B cell (primary cell): ENCODE measurements at regions of chr6 and their contacts with region 1.

Region 1: DNA sequence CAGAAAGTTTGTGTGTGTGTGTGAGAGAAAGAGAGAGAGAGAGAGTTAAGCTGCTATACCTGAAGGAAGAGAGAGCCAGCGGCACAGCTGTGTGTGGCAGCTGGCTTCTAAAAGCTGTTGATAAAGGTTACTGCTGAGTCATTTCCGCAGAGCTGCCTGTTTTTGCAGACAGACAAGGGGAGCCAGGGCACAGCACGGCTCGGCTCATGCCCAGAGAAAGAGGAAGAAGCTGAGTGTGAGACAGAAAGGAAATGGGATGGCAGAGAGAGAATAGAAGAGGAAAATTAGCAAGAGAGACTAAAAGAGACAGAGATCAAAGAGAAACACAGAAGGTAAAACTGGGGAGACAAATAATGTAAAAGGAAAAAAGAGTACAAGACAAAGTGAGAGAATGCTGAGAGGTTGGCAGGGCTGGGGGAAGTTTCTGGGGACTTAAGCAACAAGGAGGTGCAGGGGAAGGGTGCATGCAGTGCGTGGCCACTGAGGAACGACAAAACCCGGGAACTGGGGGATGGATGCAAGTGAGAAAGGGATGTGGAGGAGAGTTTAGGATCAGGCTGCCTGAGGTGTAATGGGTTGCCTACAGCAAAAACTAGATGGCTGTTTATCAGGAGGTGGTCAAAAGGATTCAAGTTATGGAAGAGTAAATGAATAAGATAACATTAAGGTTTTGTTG is 22.7 kb downstream of the HLA-A start:
- DNase-seq: peak; percentile 89
- ATAC-seq: peak; percentile 93
- H3K4me3 ChIP-seq: peak overlapping the region in 4 of 5 experiments; percentile 38 to 65 (median 46)
- H3K4me3 Mint-ChIP-seq: peak overlapping the region; percentile 86
- H3K27ac ChIP-seq: peak overlapping the region; percentile 47 to 66
- H3K27ac Mint-ChIP-seq: peak overlapping the region; percentile 90
- H3K4me1 ChIP-seq: peaks cover 25 to 30% of the 10 kb centered on the region in 2 donors
- H3K4me1 Mint-ChIP-seq: peaks cover 41% of the 10 kb centered on the region
- H3K27me3 ChIP-seq: no peaks in the 10 kb centered on the region
- H3K27me3 Mint-ChIP-seq: no peaks in the 10 kb centered on the region
- CTCF ChIP-seq: no peak

Region 2: GRCh38 chr6:29255530-29255929 is 709.5 kb before region 1 on chr6:
- CTCF ChIA-PET with region 1: no interaction called
- POLR2A ChIA-PET with region 1: no interaction called
- intact Hi-C with region 1: no loop called
- DNase-seq: no peak
- ATAC-seq: no peak
- H3K4me3 ChIP-seq: no peak overlapping the region
- H3K4me3 Mint-ChIP-seq: no peak overlapping the region
- H3K27ac ChIP-seq: no peak overlapping the region
- H3K27ac Mint-ChIP-seq: no peak overlapping the region
- H3K4me1 ChIP-seq: no peaks in the 10 kb centered on the region
- H3K4me1 Mint-ChIP-seq: no peaks in the 10 kb centered on the region
- H3K27me3 ChIP-seq: no peaks in the 10 kb centered on the region
- H3K27me3 Mint-ChIP-seq: no peaks in the 10 kb centered on the region
- CTCF ChIP-seq: no peak

Region 3: GRCh38 chr6:29926413-29927274 is 38.4 kb before region 1 on chr6:
- CTCF ChIA-PET with region 1: no interaction called
- POLR2A ChIA-PET with region 1: interaction called, 7 read pairs
- intact Hi-C with region 1: loop called (anchors 5 kb)
- DNase-seq: peak; percentile 89
- ATAC-seq: peak; percentile 84
- H3K4me3 ChIP-seq: peak overlapping the region; percentile 59 to 88 (median 74)
- H3K4me3 Mint-ChIP-seq: peak overlapping the region; percentile 93
- H3K27ac ChIP-seq: peak overlapping the region; percentile 91 to 93
- H3K27ac Mint-ChIP-seq: peak overlapping the region; percentile 95
- H3K4me1 ChIP-seq: peaks cover 4 to 17% of the 10 kb centered on the region in 2 donors
- H3K4me1 Mint-ChIP-seq: peaks cover 14% of the 10 kb centered on the region
- H3K27me3 ChIP-seq: no peaks in the 10 kb centered on the region
- H3K27me3 Mint-ChIP-seq: no peaks in the 10 kb centered on the region
- CTCF ChIP-seq: no peak

Region 4: DNA sequence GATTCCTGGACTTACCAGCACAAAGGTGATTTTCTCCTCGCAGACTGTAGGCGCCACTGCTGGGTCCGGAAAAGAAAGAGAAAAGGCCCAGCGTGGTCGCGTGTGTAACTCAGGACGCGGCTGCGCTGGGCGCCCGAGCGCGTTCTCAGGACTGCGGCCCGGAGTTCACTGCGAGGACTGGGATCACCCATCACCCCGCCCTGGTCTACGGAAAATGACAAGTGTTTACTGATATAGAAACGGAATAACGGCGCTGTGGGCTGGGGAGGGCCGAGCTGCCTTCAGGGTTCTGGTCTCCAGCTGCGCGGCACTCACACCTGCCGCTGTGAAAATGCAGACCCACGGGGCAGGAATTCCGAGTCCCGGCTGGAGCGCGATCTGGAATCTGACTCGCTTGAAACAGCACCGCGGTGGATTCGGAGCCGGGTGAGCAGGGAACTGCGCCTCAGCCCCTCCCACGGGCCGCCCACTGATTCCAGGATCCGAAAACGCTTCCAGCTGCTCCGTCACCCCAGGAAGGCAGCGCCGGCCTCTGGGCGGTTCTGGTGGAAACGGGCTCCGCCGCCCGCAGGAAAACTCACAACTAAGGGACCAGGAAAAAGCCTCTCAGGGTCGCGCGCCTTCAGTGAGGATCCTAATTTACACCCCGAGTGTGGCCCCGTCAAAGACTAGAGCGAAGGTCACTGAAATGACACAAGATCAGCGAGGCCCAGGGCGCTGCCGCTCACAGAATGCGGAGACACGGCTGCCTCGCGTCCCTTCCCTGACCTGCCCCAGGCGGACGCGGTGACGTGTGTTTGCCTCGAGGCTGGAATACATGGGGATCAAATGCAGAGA is 11.8 kb after region 1 on chr6:
- CTCF ChIA-PET with region 1: interaction called, 12 read pairs
- POLR2A ChIA-PET with region 1: interaction called, 15 read pairs
- intact Hi-C with region 1: loop called (anchors 1 kb)
- DNase-seq: peak; percentile 77
- ATAC-seq: peak; percentile 87
- H3K4me3 ChIP-seq: peak overlapping the region in 4 of 5 experiments; percentile 39 to 75 (median 57)
- H3K4me3 Mint-ChIP-seq: peak overlapping the region; percentile 92
- H3K27ac ChIP-seq: no peak overlapping the region
- H3K27ac Mint-ChIP-seq: no peak overlapping the region
- H3K4me1 ChIP-seq: peaks cover 25 to 26% of the 10 kb centered on the region in 2 donors
- H3K4me1 Mint-ChIP-seq: peaks cover 34% of the 10 kb centered on the region
- H3K27me3 ChIP-seq: peaks cover 0 to 44% (median 30%) of the 10 kb centered on the region in 4 experiments
- H3K27me3 Mint-ChIP-seq: peaks cover 48% of the 10 kb centered on the region
- CTCF ChIP-seq: no peak

Region 5: DNA sequence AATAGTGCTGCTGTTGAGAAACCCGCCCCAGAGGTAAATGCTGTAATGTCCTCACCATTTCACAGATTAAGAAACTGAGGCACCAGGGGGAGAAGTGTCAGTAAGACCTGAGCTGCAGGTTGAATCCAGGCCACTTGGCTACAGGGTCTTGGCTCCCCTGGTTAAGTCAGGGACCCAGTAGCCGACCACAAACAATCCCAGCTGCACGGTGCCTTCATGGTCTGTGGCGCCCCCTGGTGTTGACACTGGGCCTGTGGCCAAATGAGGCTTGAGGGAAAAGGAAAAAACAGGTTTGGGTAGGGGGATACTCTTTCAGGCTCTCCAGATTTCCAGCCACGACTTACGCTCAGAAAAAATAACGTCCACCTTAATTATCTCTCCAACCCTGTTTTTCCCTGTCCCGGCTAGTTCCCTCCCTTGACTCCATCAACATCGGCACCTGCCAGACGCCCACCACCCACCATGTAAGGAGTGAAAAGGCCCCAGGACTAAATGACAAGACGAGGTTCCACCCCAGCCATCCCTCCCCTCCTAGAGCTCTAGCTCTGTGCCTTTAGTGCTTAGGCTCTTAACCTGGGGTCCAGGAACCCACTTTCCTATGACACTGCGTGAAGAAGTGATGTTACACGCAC is 48.4 kb after region 1 on chr6:
- CTCF ChIA-PET with region 1: interaction called, 21 read pairs
- POLR2A ChIA-PET with region 1: interaction called, 6 read pairs
- intact Hi-C with region 1: loop called (anchors 5 kb)
- DNase-seq: peak; percentile 63
- ATAC-seq: peak; percentile 43
- H3K4me3 ChIP-seq: no peak overlapping the region
- H3K4me3 Mint-ChIP-seq: no peak overlapping the region
- H3K27ac ChIP-seq: no peak overlapping the region
- H3K27ac Mint-ChIP-seq: no peak overlapping the region
- H3K4me1 ChIP-seq: peaks cover 0 to 2% of the 10 kb centered on the region in 2 donors
- H3K4me1 Mint-ChIP-seq: no peaks in the 10 kb centered on the region
- H3K27me3 ChIP-seq: peaks cover 0 to 4% (median 0%) of the 10 kb centered on the region in 4 experiments
- H3K27me3 Mint-ChIP-seq: peaks cover 3% of the 10 kb centered on the region
- CTCF ChIP-seq: peak; percentile 79